Gastrocnemius medialis (tissue), 4 donors: ENCODE measurements at regions of chrX and their contacts with region 1.

Region 1: DNA sequence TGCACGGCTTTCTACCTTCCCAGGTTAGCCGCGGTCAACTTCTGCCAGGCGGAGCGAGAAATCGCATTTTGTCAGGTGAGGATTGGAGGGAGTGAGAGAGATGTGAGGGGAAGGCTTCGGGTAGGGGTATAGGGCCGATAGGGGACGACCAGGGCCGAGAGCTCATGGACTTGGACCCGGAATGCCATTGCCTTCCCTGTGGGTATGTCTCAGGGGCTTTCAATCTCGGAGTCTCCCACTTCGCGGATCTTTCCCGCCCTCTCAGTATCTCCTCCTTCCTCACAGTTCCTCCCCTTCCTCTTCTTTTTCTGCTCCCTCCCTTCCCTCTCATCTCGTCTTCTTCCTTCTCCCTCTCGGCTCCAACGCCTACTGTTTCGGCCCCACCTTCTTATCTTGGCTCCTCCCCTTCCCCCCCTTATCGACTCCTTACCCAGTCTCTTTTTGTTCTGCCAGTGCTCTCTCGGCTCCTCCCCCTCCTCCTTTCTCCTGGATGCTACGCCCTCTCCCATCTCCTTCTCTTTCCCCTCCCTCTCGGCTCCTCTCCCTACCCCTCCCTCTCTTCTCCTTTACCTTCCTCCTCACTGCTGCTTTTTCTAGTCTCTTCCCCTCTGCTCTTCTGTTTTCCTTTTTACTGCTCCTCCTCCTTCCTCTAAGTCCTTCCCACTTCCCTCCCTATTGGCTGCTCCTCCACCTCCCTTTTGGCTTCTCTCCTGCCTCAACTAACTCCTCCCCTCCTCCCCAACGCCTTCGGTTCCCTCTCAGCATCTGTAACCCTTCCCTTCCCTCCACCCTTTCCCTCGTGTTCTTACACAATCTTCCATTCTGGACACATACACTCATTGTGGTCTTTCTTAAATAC is 29.4 kb upstream of the RBMX start:
- DNase-seq: peak; percentile 60 to 76
- ATAC-seq: peak; percentile 85 to 87
- H3K4me3 ChIP-seq: peak overlapping the region; percentile 69 to 84 (median 74)
- H3K27ac ChIP-seq: peak overlapping the region; percentile 79 to 84 (median 82)
- H3K4me1 ChIP-seq: peaks cover 0 to 3% of the 10 kb centered on the region in 2 donors
- H3K27me3 ChIP-seq: no peaks in the 10 kb centered on the region
- CTCF ChIP-seq: no peak
- POLR2A ChIP-seq: peak; percentile 30 to 48

Region 2: DNA sequence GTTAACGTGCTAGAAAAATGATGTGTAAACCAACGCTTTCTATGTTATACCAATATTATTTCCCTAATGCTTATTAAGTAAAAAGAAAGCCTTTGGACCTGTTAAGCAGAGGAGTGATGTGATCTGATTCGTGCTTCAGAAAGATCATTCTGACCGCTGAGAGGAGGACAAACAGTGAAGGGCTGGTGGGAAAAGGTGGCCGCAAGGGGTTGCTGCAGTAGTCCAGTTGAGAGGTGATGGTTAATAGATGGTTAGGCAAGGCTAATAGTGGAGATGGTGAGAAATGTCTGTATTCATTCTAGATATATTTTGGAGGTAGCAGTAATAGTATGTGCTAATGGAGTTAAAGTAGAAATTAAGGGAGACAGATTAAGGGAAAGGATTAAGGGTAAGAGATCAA is 390.9 kb before region 1 on chrX:
- in situ Hi-C with region 1: no loop called
- intact Hi-C with region 1: no loop called
- DNase-seq: no peak
- ATAC-seq: no peak
- H3K4me3 ChIP-seq: no peak overlapping the region
- H3K27ac ChIP-seq: no peak overlapping the region
- H3K4me1 ChIP-seq: no peaks in the 10 kb centered on the region
- H3K27me3 ChIP-seq: no peaks in the 10 kb centered on the region
- CTCF ChIP-seq: no peak
- POLR2A ChIP-seq: no peak

Region 3: DNA sequence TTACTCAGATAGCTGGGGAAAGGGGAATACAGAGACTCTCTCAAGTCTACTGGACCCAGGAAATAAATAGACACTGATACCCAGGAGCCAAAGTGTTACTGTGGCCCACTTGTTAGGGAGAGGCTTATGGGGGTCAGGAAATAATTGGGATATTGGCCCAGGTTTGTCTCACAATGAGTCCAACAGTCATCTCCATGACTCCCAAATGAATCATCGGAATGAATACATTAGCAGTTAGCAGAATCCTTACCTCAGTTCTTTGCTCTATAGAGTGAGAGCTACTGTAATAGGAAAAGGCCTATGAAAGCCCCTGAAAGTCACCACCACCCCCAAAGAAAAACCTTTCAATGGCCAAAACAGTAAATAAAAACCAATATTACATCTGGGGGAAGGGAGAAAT is 86.8 kb before region 1 on chrX:
- in situ Hi-C with region 1: no loop called
- intact Hi-C with region 1: no loop called
- DNase-seq: no peak
- ATAC-seq: no peak
- H3K4me3 ChIP-seq: no peak overlapping the region
- H3K27ac ChIP-seq: peak overlapping the region in 3 of 4 donors; percentile 18 to 63 (median 37)
- H3K4me1 ChIP-seq: peaks cover 0 to 5% of the 10 kb centered on the region in 2 donors
- H3K27me3 ChIP-seq: no peaks in the 10 kb centered on the region
- CTCF ChIP-seq: no peak
- POLR2A ChIP-seq: no peak

Region 4: DNA sequence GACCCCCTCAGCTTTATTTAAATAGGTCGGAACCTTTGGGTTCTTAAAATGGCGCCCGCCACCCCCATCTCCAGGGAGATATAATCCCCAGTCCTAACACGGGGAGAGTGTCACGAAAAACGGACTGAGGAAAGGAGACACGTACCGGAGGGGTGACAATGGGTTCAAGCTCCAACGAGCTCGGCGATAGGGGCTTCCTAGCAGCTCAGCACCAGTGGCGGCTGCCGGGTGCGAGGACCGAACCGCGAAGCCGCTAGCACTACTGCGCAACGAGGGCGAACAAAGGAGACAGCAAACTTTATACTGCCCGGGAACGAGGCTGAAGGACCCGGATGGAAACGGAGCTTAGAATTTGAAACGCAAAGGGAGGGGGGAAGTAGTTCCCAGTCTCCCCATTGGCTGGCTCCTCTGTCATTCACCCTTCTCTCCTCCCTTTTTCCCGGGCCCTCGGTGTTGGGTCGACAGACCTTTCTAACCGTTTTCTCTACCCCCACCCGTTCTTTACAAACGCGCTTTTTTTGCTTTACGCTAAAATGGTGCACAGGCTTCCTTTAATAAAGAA is 29.4 kb before region 1 on chrX and contains the start of gene RBMX:
- in situ Hi-C with region 1: no loop called
- intact Hi-C with region 1: loop called (anchors 1 kb)
- DNase-seq: peak; percentile 87 to 91
- ATAC-seq: peak; percentile 99
- H3K4me3 ChIP-seq: peak within 1 kb of the TSS; percentile 77 to 91 (median 79)
- H3K27ac ChIP-seq: peak within 1 kb of the TSS; percentile 95 to 98 (median 96)
- H3K4me1 ChIP-seq: peaks cover 8 to 10% of the 10 kb centered on the region in 2 donors
- H3K27me3 ChIP-seq: no peaks in the 10 kb centered on the region
- CTCF ChIP-seq: no peak
- POLR2A ChIP-seq: peak; percentile 93 to 94
- total RNA-seq, gene RBMX: 113 to 339 (median 248) TPM